ENCODE measurements at regions of chr15 and their contacts with region 1.

Region 1: DNA sequence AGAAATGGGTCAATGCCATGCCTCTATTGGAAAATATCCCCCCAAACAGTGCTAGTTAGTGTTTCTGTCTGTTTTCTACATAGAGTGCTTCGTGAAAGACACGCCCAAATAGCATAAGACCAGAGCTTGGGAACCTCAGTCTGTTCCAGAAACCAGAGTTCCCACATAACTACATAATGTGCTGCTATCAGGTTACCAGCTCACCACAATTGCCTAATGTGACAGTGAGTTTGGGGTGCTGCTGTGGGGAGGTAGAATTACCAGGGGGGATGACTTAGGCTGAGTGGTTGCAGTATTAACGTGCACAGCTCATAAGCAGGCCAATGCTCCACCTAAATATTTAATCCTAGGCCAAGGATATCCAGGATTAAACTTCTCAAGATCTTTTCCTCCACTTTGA is 39.2 kb downstream of the DUT start:
- DNase-seq: no peak
- H3K4me3 ChIP-seq: no peak overlapping the region
- H3K27ac ChIP-seq: no peak overlapping the region
- H3K4me1 ChIP-seq: no peaks in the 10 kb centered on the region
- H3K27me3 ChIP-seq: no peaks in the 10 kb centered on the region

Region 2: DNA sequence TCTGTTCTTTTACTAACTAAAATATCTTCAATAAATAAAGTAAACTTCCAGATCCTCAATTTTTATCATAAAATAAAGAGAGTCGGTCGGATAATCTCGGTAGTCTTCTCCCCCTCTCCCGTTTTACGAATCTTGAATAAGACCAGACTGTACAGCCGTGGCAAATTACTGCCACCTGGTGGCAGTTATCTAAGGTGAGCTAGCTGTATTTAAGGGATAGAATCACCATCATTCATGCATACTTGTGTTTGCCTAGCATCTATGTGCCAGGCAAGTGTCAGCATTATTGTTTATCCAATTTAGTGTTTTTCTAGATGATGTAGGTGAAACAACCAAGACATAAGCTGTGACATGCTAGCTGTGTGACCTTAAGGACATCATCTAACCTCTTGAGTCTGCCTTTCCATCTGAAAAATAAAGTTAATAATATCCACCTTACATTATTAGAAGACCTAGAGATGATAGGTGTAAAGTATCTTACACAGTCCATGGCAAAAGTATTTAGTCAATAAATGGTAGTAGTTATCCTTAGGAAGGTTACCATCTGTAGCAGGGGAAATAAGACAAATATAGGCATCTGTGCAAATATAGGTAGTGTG is 17.9 kb before region 1 on chr15:
- CTCF ChIA-PET with region 1: interaction called, 11 read pairs
- POLR2A ChIA-PET with region 1: no interaction called
- DNase-seq: peak; percentile 73 to 82 (median 80)
- H3K4me3 ChIP-seq: peak overlapping the region in 1 of 7 experiments; percentile 38
- H3K27ac ChIP-seq: no peak overlapping the region
- H3K4me1 ChIP-seq: peaks cover 0 to 5% (median 0%) of the 10 kb centered on the region in 4 experiments
- H3K27me3 ChIP-seq: no peaks in the 10 kb centered on the region

Region 3: DNA sequence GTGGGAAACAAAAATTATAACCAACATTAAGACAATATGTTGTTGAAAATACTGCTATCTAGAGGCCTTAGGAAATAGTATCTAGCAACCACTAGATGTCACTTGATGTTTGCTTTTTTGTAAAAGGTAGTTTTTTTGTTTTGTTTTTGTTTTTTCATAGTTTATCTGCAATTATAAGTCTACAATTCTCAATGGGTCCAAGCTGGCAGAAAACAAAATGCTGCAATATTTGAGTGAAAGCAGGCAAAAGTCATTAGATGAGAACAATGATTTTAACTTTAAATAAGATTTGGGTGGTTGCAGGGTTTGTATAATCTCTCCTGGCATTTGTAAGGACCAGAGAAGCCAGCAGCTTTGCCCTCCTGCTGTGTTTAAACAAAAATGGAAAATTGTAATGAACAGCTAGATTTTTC is 12.2 kb before region 1 on chr15:
- CTCF ChIA-PET with region 1: interaction called, 11 read pairs
- POLR2A ChIA-PET with region 1: no interaction called
- DNase-seq: peak; percentile 47 to 66 (median 65)
- H3K4me3 ChIP-seq: peak overlapping the region in 4 of 7 experiments; percentile 0 to 60 (median 26)
- H3K27ac ChIP-seq: no peak overlapping the region
- H3K4me1 ChIP-seq: peaks cover 3 to 14% (median 11%) of the 10 kb centered on the region in 4 experiments
- H3K27me3 ChIP-seq: no peaks in the 10 kb centered on the region

Region 4: GRCh38 chr15:48392356-48392755 is 21.9 kb after region 1 on chr15:
- CTCF ChIA-PET with region 1: no interaction called
- POLR2A ChIA-PET with region 1: no interaction called
- DNase-seq: no peak
- H3K4me3 ChIP-seq: no peak overlapping the region
- H3K27ac ChIP-seq: no peak overlapping the region
- H3K4me1 ChIP-seq: no peaks in the 10 kb centered on the region
- H3K27me3 ChIP-seq: no peaks in the 10 kb centered on the region

Region 5: GRCh38 chr15:48459571-48460470 is 89.4 kb after region 1 on chr15:
- CTCF ChIA-PET with region 1: no interaction called
- POLR2A ChIA-PET with region 1: no interaction called
- DNase-seq: no peak
- H3K4me3 ChIP-seq: no peak overlapping the region
- H3K27ac ChIP-seq: no peak overlapping the region
- H3K4me1 ChIP-seq: no peaks in the 10 kb centered on the region
- H3K27me3 ChIP-seq: no peaks in the 10 kb centered on the region